K562 (cell line): ENCODE measurements at regions of chr12 and their contacts with region 1.

Region 1: GRCh38 chr12:93759512-93760081 is 82.4 kb downstream of the CRADD start:
- DNase-seq: peak in 1 of 4 experiments; percentile 35
- ATAC-seq: no peak
- H3K4me3 ChIP-seq: no peak overlapping the region
- H3K27ac ChIP-seq: peak overlapping the region; percentile 84
- H3K4me1 ChIP-seq: peaks cover 24 to 81% of the 10 kb centered on the region in 2 experiments
- H3K27me3 ChIP-seq: no peaks in the 10 kb centered on the region
- CTCF ChIP-seq: no peak
- EP300 ChIP-seq: no peak
- POLR2A ChIP-seq: no peak
- RAD21 ChIP-seq: no peak

Region 2: GRCh38 chr12:93707836-93708235 is 51.8 kb before region 1 on chr12:
- CTCF ChIA-PET with region 1: interaction called, 3 read pairs
- POLR2A ChIA-PET with region 1: no interaction called
- in situ Hi-C with region 1: no loop called
- intact Hi-C with region 1: loop called (anchors 2 kb)
- DNase-seq: no peak
- ATAC-seq: no peak
- H3K4me3 ChIP-seq: no peak overlapping the region
- H3K27ac ChIP-seq: no peak overlapping the region
- H3K4me1 ChIP-seq: peaks cover 0 to 38% of the 10 kb centered on the region in 2 experiments; a peak in 4 of 5 replicates
- H3K27me3 ChIP-seq: no peaks in the 10 kb centered on the region
- CTCF ChIP-seq: no peak
- EP300 ChIP-seq: no peak
- POLR2A ChIP-seq: no peak
- RAD21 ChIP-seq: no peak